ENCODE measurements at regions of chr17 and their contacts with region 1.

Region 1: DNA sequence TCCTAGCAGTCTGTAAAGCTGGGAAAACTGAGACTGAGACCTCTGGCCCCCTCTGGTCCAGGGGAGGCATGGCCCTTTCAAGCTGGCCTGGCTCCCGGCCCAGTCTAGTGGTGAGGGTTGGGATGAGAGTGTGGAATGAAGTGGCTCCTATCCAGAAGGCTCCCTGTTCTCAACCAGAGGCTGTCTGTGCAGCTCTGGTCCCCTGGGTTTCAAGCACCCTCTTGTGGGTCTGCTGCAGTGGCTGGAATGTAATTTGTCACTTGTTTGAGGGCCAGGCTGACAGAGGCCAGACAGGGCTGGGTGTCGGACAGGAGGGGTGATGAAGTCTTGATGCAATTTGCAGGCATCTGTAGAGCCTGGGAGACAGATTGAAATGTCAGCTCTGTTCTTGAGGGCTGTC is 22.1 kb upstream of the PHF12 start:
- DNase-seq: peak; percentile 86
- H3K4me3 ChIP-seq: no peak overlapping the region
- H3K27ac ChIP-seq: peak overlapping the region in 1 of 2 experiments; percentile 96; a peak in 2 of 4 replicates
- H3K4me1 ChIP-seq: peaks cover 0 to 85% of the 10 kb centered on the region in 2 experiments; a peak in 3 of 4 replicates
- H3K27me3 ChIP-seq: peaks cover 4% of the 10 kb centered on the region; the same call in 1 of the 2 replicates
- CTCF ChIP-seq: no peak
- EP300 ChIP-seq: peak in 1 of 2 experiments; percentile 95; a peak in 2 of 4 replicates
- RAD21 ChIP-seq: peak; percentile 56

Region 2: DNA sequence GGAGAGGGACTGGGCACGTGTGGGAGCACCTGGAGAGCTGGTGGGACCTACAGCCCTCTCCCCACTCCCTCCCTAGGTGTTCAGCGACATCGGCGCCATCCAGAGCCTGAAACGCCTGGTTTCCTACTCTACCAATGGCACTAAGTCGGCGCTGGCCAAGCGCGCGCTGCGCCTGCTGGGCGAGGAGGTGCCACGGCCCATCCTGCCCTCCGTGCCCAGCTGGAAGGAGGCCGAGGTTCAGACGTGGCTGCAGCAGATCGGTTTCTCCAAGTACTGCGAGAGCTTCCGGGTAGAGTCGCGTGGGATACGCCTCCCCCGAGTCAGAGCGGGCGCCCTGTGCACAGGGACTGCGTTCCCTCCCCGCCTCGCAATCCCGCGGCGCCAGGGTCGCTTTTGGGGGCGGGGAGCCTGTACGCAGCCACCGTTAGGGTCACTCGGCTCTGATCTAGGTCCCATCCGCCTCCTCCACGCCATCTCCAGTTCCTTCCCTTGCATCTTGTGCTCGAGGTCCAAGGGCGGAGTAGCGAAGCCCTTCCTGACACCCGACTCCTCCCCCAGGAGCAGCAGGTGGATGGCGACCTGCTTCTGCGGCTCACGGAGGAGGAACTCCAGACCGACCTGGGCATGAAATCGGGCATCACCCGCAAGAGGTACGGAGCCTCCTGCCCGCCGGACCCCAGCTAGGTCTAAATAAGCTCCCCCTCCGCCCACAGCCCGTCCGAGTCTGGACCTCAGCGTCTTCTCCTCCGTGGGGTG is 589.0 kb before region 1 on chr17:
- CTCF ChIA-PET with region 1: no interaction called
- POLR2A ChIA-PET with region 1: no interaction called
- DNase-seq: no peak
- H3K4me3 ChIP-seq: no peak overlapping the region
- H3K27ac ChIP-seq: no peak overlapping the region
- H3K4me1 ChIP-seq: peaks cover 7 to 14% of the 10 kb centered on the region in 2 experiments; a peak in 2 of 4 replicates
- H3K27me3 ChIP-seq: no peaks in the 10 kb centered on the region
- CTCF ChIP-seq: no peak
- EP300 ChIP-seq: no peak
- RAD21 ChIP-seq: no peak

Region 3: GRCh38 chr17:29042679-29043538 is 69.5 kb after region 1 on chr17 and contains the start of gene PIPOX:
- CTCF ChIA-PET with region 1: interaction called, 17 read pairs
- POLR2A ChIA-PET with region 1: interaction called, 17 read pairs
- DNase-seq: peak; percentile 76
- H3K4me3 ChIP-seq: no peak within 1 kb of the TSS
- H3K27ac ChIP-seq: peak within 1 kb of the TSS in 1 of 2 experiments; percentile 58; a peak in 2 of 4 replicates
- H3K4me1 ChIP-seq: peaks cover 43 to 49% of the 10 kb centered on the region in 2 experiments; a peak in 3 of 4 replicates
- H3K27me3 ChIP-seq: 0 out of 2 replicates have a peak, but pooled peaks cover under 1% of the 10 kb centered on the region
- CTCF ChIP-seq: peak; percentile 32; the same call in 1 of the 2 replicates
- EP300 ChIP-seq: no peak
- RAD21 ChIP-seq: peak; percentile 59
- polyA plus RNA-seq, gene PIPOX: 0.31 and 0.55 TPM in 2 replicates

Region 4: DNA sequence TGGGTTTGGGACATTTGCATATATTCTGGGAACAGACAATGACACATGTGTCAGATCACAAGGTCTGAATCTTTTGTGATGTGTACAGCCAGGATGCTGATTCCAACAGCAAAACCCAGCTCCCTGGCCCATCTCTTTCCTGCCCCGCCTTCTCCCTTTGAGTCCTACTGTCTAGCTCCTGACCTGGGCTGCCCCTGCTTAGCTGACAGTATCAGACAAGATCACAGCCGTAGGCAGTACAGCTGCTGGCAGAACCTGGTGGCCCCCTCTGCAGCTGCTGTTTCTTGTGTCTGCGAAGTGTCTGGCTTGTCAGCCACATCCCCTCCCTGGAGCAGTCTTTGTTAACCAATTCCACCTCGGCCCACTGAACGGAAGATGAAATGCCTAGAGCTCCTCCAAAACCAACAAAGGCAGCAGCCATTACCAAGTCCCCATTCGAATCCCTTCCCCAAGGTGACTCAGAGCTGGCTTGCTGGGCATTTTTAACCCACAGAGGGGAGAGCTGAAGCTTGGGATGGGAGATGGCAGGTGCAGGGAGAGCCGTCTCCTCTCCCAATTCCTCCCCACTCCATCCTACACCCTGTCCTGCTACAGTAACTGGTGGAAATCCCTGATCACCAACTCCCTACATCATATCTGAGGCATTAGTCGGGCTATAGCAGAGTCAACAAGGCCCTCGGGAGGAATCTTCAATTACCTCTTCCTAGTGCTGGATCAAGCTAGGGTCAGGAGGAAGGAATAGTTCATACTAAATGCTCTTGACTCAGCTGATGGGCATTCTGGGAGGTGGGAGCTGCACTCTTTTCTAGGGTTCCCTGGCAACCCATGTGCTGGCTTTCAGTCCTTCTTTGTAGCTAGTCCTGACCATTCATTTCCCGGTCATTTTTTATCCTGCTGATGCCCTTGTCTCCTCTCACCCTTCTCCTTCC is 75.3 kb after region 1 on chr17:
- CTCF ChIA-PET with region 1: interaction called, 17 read pairs
- POLR2A ChIA-PET with region 1: interaction called, 17 read pairs
- DNase-seq: peak; percentile 80
- H3K4me3 ChIP-seq: no peak overlapping the region
- H3K27ac ChIP-seq: peak overlapping the region; percentile 55 to 99
- H3K4me1 ChIP-seq: peaks cover 27 to 64% of the 10 kb centered on the region in 2 experiments
- H3K27me3 ChIP-seq: no peaks in the 10 kb centered on the region
- CTCF ChIP-seq: no peak
- EP300 ChIP-seq: peak in 1 of 2 experiments; percentile 100; a peak in 2 of 4 replicates
- RAD21 ChIP-seq: peak; percentile 20

Region 5: DNA sequence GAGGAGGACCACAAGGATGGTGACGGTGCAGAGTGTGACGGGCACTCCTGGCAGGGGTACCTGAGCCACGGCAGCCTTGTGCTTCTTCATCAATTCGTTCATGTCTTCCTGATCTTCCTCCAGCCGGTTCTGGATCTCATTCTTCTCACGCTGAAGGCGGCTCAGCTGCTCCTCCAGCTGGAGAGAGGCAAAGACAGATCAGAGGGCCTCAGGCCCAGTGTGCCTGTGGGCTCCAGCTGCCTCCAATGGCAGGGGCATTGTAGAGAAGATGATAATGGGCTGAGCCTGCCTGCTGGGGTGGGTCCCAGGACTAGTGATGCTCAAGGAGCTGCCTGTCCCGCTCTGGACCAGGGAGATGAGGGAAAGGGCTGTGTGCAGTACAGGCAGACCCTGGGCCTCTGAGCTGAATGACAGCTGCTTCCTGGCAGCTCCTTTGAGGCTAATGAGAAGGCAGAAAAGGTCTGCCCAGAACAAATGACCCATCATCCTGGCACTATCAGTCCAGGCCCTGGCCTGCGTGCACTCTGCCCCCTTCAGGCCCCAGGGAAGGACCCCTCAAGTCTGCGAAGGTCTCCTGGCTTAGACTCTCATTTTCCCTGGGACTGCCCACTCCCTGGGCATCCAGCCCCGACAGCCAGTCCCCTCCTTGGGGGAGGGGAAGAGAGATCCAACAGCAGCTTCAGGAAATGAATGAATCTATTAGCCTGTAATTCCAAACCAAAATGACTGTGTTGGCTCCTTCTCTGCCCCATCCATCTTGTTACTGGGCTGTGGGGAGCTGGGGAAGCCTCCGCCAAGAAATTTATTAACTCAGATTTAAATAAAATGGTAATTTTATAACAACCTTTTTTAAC is 117.6 kb after region 1 on chr17:
- CTCF ChIA-PET with region 1: interaction called, 11 read pairs
- POLR2A ChIA-PET with region 1: interaction called, 3 read pairs
- DNase-seq: peak; percentile 56
- H3K4me3 ChIP-seq: no peak overlapping the region
- H3K27ac ChIP-seq: peak overlapping the region in 1 of 2 experiments; percentile 53; a peak in 2 of 4 replicates
- H3K4me1 ChIP-seq: peaks cover 0 to 21% of the 10 kb centered on the region in 2 experiments; a peak in 3 of 4 replicates
- H3K27me3 ChIP-seq: no peaks in the 10 kb centered on the region
- CTCF ChIP-seq: no peak
- EP300 ChIP-seq: no peak
- RAD21 ChIP-seq: no peak; the same call in 1 of the 2 replicates

Measured in SK-N-SH (cell line).